Heart right ventricle (tissue), 16 donors: ENCODE measurements at regions of chr7 and their contacts with region 1.

Region 1: DNA sequence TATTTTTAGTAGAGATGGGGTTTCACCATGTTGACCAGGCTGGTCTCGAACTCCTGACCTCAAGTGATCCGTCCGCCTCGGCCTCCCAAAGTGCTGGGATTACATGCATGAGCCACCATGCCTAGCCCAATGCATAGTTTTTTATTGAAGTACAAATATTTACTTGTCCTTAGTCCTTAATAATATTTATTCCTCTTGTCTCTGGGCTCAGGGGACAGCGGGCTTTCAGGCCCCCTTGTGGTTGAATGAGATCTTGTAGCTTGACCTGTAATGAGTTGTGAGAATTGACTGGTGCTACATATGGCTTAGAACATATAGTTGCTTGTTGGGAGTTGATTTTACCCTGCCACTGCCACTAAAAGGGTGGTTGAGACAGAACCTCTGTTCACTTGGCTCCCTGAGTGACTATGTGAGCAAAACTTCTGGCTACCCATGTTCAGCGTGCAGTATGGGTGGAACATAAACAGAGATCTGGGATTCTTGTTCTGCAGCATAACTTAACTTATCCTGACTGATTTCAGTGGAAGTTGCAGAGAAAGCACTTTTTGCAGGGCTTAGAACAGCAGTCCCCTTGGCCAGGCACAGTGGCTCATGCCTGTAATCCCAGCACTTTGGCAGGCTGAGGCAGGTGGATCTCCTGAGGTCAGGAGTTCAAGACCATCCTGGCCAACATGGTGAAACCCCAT is 14.9 kb downstream of the CCL26 start:
- DNase-seq: peak in 1 of 2 donors; percentile 17
- ATAC-seq: peak in 1 of 8 donors; percentile 53
- H3K4me3 ChIP-seq: no peak overlapping the region
- H3K27ac ChIP-seq: no peak overlapping the region
- H3K4me1 ChIP-seq: peaks cover 0 to 1% (median 0%) of the 10 kb centered on the region in 9 donors
- H3K27me3 ChIP-seq: no peaks in the 10 kb centered on the region
- CTCF ChIP-seq: peak in 8 of 9 donors; percentile 11 to 54 (median 46)

Region 2: DNA sequence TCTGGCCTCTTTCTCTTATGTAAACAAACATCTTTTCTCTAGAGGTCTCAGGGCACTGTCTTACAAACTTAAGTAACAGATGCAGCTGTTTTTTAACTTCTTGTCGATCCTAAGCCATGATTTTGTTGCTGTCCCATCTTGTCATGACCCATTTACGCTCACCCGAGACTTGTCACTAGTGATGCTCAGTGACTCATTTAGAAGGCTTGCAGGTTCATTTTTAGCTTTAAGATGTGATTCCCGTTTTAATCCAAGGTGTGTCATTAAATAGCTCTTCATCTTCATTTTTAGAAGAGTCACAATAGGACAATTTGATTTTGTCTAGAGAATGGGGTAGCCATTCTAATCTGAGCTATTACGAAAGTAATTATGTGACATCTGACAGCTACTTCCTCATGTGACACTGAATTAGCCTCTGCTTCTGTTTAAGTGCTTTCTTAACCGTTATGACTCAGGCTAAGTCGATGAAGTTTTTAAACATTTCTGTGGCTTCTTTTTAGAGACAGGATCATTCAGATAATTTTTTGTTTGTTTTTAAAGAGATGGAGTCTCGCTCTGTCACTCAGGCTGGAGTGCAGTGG is 222.3 kb before region 1 on chr7:
- intact Hi-C with region 1: loop called in 3 of 10 experiments (anchors 10 kb)
- DNase-seq: no peak
- ATAC-seq: no peak
- H3K4me3 ChIP-seq: no peak overlapping the region
- H3K27ac ChIP-seq: peak overlapping the region in 1 of 10 donors; percentile 62
- H3K4me1 ChIP-seq: peaks cover 0 to 6% (median 0%) of the 10 kb centered on the region in 9 donors
- H3K27me3 ChIP-seq: no peaks in the 10 kb centered on the region
- CTCF ChIP-seq: no peak